Caco-2 (cell line): ENCODE measurements at regions of chr14 and their contacts with region 1.

Region 1: GRCh38 chr14:53767566-53767965 is 189.1 kb downstream of the BMP4 start:
- DNase-seq: no peak
- H3K4me3 ChIP-seq: no peak overlapping the region
- H3K4me3 Mint-ChIP-seq: no peak overlapping the region
- H3K27ac Mint-ChIP-seq: no peak overlapping the region
- H3K4me1 ChIP-seq: peaks cover 13% of the 10 kb centered on the region
- H3K4me1 Mint-ChIP-seq: peaks cover 22% of the 10 kb centered on the region
- H3K27me3 ChIP-seq: no peaks in the 10 kb centered on the region
- H3K27me3 Mint-ChIP-seq: no peaks in the 10 kb centered on the region
- CTCF ChIP-seq: no peak

Region 2: GRCh38 chr14:53613404-53614253 is 153.9 kb before region 1 on chr14:
- CTCF ChIA-PET with region 1: no interaction called
- POLR2A ChIA-PET with region 1: no interaction called
- intact Hi-C with region 1: loop called (anchors 10 kb)
- DNase-seq: peak; percentile 89 to 91
- H3K4me3 ChIP-seq: peak overlapping the region; percentile 41
- H3K4me3 Mint-ChIP-seq: peak overlapping the region; percentile 83
- H3K27ac Mint-ChIP-seq: peak overlapping the region; percentile 98
- H3K4me1 ChIP-seq: peaks cover 56% of the 10 kb centered on the region
- H3K4me1 Mint-ChIP-seq: peaks cover 17% of the 10 kb centered on the region
- H3K27me3 ChIP-seq: no peaks in the 10 kb centered on the region
- H3K27me3 Mint-ChIP-seq: no peaks in the 10 kb centered on the region
- CTCF ChIP-seq: peak in 1 of 2 experiments; percentile 32

Region 3: DNA sequence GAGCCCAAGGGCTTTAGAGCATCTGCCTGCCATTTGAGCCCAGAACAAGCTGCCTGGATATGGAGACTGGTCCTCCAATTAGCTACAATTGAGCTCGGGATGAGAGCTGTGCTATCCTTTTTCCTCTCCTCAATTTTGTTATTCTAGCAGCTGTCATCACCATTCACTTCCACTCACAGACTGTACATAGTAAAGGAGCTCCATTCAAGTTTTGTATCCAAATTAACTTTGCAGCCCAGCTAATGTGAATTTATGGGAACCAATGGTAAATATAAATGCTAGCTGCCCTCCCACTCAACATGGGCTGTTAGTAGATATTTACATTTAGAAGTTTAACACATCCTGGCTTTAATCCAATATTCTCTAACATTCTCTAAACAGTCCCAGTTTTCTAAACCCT is 144.5 kb after region 1 on chr14:
- CTCF ChIA-PET with region 1: no interaction called
- POLR2A ChIA-PET with region 1: no interaction called
- intact Hi-C with region 1: no loop called
- DNase-seq: no peak
- H3K4me3 ChIP-seq: no peak overlapping the region
- H3K4me3 Mint-ChIP-seq: no peak overlapping the region
- H3K27ac Mint-ChIP-seq: no peak overlapping the region
- H3K4me1 ChIP-seq: no peaks in the 10 kb centered on the region
- H3K4me1 Mint-ChIP-seq: no peaks in the 10 kb centered on the region
- H3K27me3 ChIP-seq: no peaks in the 10 kb centered on the region
- H3K27me3 Mint-ChIP-seq: no peaks in the 10 kb centered on the region
- CTCF ChIP-seq: no peak

Region 4: DNA sequence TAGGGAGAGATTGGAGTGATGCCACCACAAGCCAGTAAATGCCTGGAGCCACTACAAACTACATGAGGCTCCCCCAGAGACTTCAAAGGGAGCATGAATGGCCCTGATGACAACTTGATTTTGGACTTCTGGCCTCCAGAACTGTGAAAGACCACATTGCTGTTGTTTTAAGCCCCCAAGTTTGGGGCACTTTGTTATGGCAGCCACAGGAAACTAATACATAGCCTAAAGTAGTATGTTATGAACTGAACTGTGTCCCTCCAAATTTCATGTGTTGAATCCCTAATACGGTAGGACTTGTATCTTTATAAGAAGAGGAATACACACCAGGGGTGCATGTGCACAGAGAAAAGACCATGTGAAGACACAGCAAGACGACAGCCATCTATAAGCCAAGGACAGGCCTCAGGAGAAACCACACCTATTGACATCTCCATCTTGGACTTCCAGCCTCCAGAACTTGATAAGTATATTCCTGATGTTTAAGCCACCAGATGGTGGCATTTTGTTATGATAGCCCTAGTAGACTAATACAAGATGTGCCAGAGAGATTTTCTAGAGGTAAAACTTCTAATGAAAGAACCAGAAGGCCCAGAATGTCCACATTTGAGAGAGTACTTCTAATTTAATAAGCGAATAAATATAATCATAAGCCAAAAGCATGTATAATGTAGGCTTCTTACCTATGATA is 316.1 kb after region 1 on chr14:
- CTCF ChIA-PET with region 1: interaction called, 11 read pairs
- POLR2A ChIA-PET with region 1: no interaction called
- intact Hi-C with region 1: no loop called
- DNase-seq: no peak
- H3K4me3 ChIP-seq: no peak overlapping the region
- H3K4me3 Mint-ChIP-seq: no peak overlapping the region
- H3K27ac Mint-ChIP-seq: no peak overlapping the region
- H3K4me1 ChIP-seq: peaks cover 8% of the 10 kb centered on the region; the same call in 1 of the 2 replicates
- H3K4me1 Mint-ChIP-seq: no peaks in the 10 kb centered on the region
- H3K27me3 ChIP-seq: no peaks in the 10 kb centered on the region
- H3K27me3 Mint-ChIP-seq: no peaks in the 10 kb centered on the region
- CTCF ChIP-seq: no peak